CD14-positive monocyte (primary cell): ENCODE measurements at regions of chr10 and their contacts with region 1.

Region 1: DNA sequence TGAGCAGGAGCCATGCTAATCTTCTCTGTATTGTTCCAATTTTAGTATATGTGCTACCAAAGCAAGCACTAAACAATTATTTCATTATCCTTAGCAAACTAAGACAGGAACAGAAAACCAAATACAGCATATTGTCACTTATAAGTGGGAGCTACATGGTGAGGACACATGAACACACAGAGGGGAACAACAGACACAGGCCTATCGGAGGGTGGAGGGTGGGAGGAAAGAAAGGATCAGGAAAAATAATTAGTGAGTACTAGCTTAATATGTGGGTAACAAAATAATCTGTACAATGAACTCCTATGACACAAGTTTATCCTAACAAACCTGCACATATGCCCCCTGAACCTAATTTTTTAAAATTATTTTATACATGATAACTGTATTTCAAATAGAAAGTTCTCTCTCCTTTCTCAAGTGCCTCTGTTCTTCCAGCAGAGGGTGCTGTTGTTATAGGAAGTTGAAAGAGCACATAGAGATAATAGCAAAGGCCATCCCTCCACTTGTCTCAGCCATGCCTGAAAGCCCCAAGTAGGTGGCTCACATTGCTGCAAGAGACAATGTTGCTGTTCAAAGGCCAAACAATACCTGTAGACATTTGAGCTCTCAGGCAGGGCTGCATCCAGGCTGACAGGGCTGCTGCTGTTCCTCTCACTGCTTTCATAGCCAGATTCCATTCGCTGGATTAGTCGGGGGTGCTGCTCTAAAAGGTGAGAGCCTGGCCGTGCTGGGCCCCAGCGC is 33.4 kb upstream of the PPP3CB start:
- DNase-seq: peak; percentile 45 to 67 (median 65)
- H3K4me3 ChIP-seq: no peak overlapping the region
- H3K4me3 Mint-ChIP-seq: no peak overlapping the region
- H3K27ac ChIP-seq: no peak overlapping the region
- H3K27ac Mint-ChIP-seq: peak overlapping the region in 1 of 7 donors; percentile 33
- H3K4me1 ChIP-seq: no peaks in the 10 kb centered on the region
- H3K4me1 Mint-ChIP-seq: no peaks in the 10 kb centered on the region
- H3K27me3 ChIP-seq: no peaks in the 10 kb centered on the region
- H3K27me3 Mint-ChIP-seq: no peaks in the 10 kb centered on the region
- CTCF ChIP-seq: peak; percentile 83

Region 2: GRCh38 chr10:73480158-73480557 is 49.1 kb before region 1 on chr10:
- intact Hi-C with region 1: no loop called
- DNase-seq: no peak
- H3K4me3 ChIP-seq: no peak overlapping the region
- H3K4me3 Mint-ChIP-seq: no peak overlapping the region
- H3K27ac ChIP-seq: no peak overlapping the region
- H3K27ac Mint-ChIP-seq: no peak overlapping the region
- H3K4me1 ChIP-seq: no peaks in the 10 kb centered on the region
- H3K4me1 Mint-ChIP-seq: no peaks in the 10 kb centered on the region
- H3K27me3 ChIP-seq: no peaks in the 10 kb centered on the region
- H3K27me3 Mint-ChIP-seq: no peaks in the 10 kb centered on the region
- CTCF ChIP-seq: no peak

Region 3: GRCh38 chr10:73644015-73644743 is 114.9 kb after region 1 on chr10:
- intact Hi-C with region 1: loop called (anchors 2 kb)
- DNase-seq: peak; percentile 41 to 71 (median 59)
- H3K4me3 ChIP-seq: peak overlapping the region in 1 of 3 experiments; percentile 29
- H3K4me3 Mint-ChIP-seq: peak overlapping the region; percentile 59 to 65
- H3K27ac ChIP-seq: no peak overlapping the region
- H3K27ac Mint-ChIP-seq: peak overlapping the region in 3 of 7 donors; percentile 33 to 75 (median 40)
- H3K4me1 ChIP-seq: peaks cover 26 to 31% of the 10 kb centered on the region in 2 donors
- H3K4me1 Mint-ChIP-seq: peaks cover 42% of the 10 kb centered on the region
- H3K27me3 ChIP-seq: no peaks in the 10 kb centered on the region
- H3K27me3 Mint-ChIP-seq: peaks cover 3 to 6% (median 5%) of the 10 kb centered on the region in 3 donors
- CTCF ChIP-seq: peak; percentile 90